ENCODE measurements at regions of chr2 and their contacts with region 1.

Region 1: GRCh38 chr2:217756375-217757107 is 246.3 kb downstream of the TNS1 start:
- H3K4me3 Mint-ChIP-seq: no peak overlapping the region
- H3K27ac Mint-ChIP-seq: no peak overlapping the region
- H3K4me1 Mint-ChIP-seq: peaks cover 8% of the 10 kb centered on the region
- H3K27me3 Mint-ChIP-seq: peaks cover 51% of the 10 kb centered on the region

Region 2: GRCh38 chr2:216687646-216688045 is 1068.9 kb before region 1 on chr2:
- intact Hi-C with region 1: loop called (anchors 10 kb)
- H3K4me3 Mint-ChIP-seq: no peak overlapping the region
- H3K27ac Mint-ChIP-seq: no peak overlapping the region
- H3K4me1 Mint-ChIP-seq: peaks cover 21% of the 10 kb centered on the region
- H3K27me3 Mint-ChIP-seq: peaks cover 69% of the 10 kb centered on the region

Region 3: DNA sequence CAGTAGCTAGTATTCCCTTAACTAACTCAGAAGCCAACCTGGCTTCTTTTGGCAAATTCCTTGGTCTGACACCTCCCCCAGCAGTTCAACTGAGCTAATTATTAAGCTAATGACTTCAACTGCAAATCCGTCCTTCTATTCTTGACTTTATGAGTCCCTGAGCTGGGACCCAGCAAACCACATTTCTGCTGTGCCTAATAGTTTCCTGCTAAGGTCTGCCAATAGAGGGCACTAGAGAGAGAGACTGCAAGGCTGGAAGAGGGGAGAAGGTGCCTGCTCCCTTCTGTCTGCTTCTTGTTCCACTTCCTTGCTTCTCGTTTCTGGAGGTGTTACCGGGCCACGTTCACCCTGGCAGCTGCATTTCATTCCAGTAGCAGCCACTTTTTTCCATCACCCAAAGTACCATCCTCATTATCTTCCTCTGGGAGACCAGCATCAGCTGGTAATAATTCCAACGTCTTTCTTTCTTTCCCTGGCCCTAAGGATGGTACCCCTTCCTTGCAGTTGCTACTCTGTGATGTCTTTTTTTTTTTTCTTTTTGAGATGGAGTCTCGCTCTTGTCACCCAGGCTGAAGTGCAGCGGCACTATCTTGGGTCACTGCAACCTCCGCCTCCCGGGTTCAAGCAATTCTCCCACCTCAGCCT is 105.7 kb before region 1 on chr2:
- intact Hi-C with region 1: loop called (anchors 1 kb)
- H3K4me3 Mint-ChIP-seq: no peak overlapping the region
- H3K27ac Mint-ChIP-seq: no peak overlapping the region
- H3K4me1 Mint-ChIP-seq: peaks cover 12% of the 10 kb centered on the region
- H3K27me3 Mint-ChIP-seq: peaks cover 12% of the 10 kb centered on the region

Region 4: GRCh38 chr2:217695033-217695520 is 61.5 kb before region 1 on chr2:
- intact Hi-C with region 1: no loop called
- H3K4me3 Mint-ChIP-seq: no peak overlapping the region
- H3K27ac Mint-ChIP-seq: no peak overlapping the region
- H3K4me1 Mint-ChIP-seq: no peaks in the 10 kb centered on the region
- H3K27me3 Mint-ChIP-seq: peaks cover 7% of the 10 kb centered on the region

Measured in dendritic cell treated with granulocyte-macrophage colony-stimulating factor and Interleukin-4, amounts not matched to agents 40 ng/mL and 50 ng/mL, for 4 days (primary cell).